ENCODE measurements at regions of chr2 and their contacts with region 1.

Region 1: GRCh38 chr2:143140864-143141661 is 11.8 kb downstream of the ARHGAP15 start:
- DNase-seq: no peak
- ATAC-seq: no peak
- H3K4me3 Mint-ChIP-seq: no peak overlapping the region
- H3K27ac Mint-ChIP-seq: no peak overlapping the region
- H3K4me1 Mint-ChIP-seq: peaks cover 81% of the 10 kb centered on the region
- H3K27me3 Mint-ChIP-seq: no peaks in the 10 kb centered on the region

Region 2: GRCh38 chr2:142918624-142919023 is 222.4 kb before region 1 on chr2:
- CTCF ChIA-PET with region 1: no interaction called
- POLR2A ChIA-PET with region 1: no interaction called
- DNase-seq: no peak
- ATAC-seq: no peak
- H3K4me3 Mint-ChIP-seq: no peak overlapping the region
- H3K27ac Mint-ChIP-seq: no peak overlapping the region
- H3K4me1 Mint-ChIP-seq: no peaks in the 10 kb centered on the region
- H3K27me3 Mint-ChIP-seq: no peaks in the 10 kb centered on the region

Region 3: DNA sequence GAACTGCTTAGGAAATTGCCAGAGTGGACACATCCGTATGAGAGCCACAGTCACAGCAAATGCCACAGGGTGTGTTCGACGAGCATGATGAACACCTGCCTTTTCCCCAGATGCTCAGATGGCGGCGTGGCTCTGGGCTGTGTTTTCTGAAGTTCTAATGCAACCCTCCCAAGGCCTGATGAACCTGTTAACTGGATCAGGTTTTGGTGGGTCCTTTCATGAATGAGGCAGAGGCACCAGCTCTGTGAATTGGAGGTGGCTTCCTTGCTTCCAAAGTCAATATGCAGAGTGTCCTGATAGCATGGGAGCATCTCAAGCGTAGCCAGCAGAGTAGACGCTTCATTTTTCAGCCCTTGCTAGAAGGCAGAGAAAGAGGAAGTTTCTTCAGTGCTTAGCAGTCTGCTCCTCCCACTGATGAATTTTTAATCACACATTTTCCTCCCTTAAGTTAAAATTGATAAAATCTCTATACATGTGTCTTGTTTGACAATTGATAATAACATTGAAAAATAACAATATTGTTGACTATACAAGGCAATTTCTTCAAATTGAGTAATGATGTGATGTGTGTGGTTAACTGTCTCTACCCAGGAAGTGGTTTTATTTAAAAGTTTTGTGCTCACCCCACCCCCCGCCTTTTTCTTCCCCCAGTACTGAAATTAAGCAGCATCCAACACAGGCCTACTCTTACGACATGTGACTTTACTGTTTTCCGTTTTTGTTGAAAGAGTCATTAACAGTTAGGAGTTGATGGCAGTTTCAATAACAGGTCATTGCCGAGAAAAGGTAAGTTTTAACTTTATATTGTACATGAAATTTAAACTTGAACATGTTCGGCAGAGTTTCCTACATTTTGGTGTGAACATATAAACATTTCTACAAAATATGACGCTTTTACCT is 12.1 kb before region 1 on chr2 and contains the start of gene ARHGAP15:
- CTCF ChIA-PET with region 1: interaction called, 24 read pairs
- POLR2A ChIA-PET with region 1: interaction called, 11 read pairs
- DNase-seq: peak; percentile 90
- ATAC-seq: peak; percentile 86
- H3K4me3 Mint-ChIP-seq: peak within 1 kb of the TSS; percentile 79
- H3K27ac Mint-ChIP-seq: peak within 1 kb of the TSS; percentile 100
- H3K4me1 Mint-ChIP-seq: peaks cover 48% of the 10 kb centered on the region
- H3K27me3 Mint-ChIP-seq: no peaks in the 10 kb centered on the region
- total RNA-seq, gene ARHGAP15: 154 to 158 TPM